Heart left ventricle (tissue), 16 donors: ENCODE measurements at regions of chr3 and their contacts with region 1.

Region 1: DNA sequence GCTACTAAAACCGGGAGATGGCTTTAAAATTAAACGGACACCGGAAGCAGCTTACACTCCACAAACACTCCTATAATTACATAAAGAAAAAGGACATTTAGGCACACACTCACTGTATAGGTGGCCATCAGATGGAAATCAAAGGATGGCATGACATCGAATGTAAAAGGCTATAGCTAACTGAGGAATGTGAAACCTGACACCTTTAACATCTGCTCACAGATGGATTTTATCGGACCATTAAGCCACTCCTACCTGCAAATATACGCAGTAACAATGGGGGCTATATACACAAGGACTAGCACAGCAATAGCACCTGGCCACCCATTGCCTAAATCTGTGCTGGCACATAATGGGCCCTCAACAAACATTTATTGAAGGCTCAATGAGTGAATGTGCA is 14.5 kb upstream of the RBSN start:
- DNase-seq: no peak
- ATAC-seq: no peak
- H3K4me3 ChIP-seq: no peak overlapping the region
- H3K27ac ChIP-seq: no peak overlapping the region
- H3K4me1 ChIP-seq: peaks cover 0 to 6% (median 0%) of the 10 kb centered on the region in 12 donors
- H3K27me3 ChIP-seq: peaks cover 0 to 7% (median 0%) of the 10 kb centered on the region in 9 donors
- CTCF ChIP-seq: no peak
- POLR2A ChIP-seq: no peak

Region 2: GRCh38 chr3:15171096-15171495 is 57.6 kb after region 1 on chr3:
- intact Hi-C with region 1: loop called in 1 of 10 experiments (anchors 10 kb)
- DNase-seq: no peak
- ATAC-seq: no peak
- H3K4me3 ChIP-seq: no peak overlapping the region
- H3K27ac ChIP-seq: no peak overlapping the region
- H3K4me1 ChIP-seq: peaks cover 0 to 10% (median 0%) of the 10 kb centered on the region in 12 donors
- H3K27me3 ChIP-seq: no peaks in the 10 kb centered on the region
- CTCF ChIP-seq: no peak
- POLR2A ChIP-seq: no peak

Region 3: DNA sequence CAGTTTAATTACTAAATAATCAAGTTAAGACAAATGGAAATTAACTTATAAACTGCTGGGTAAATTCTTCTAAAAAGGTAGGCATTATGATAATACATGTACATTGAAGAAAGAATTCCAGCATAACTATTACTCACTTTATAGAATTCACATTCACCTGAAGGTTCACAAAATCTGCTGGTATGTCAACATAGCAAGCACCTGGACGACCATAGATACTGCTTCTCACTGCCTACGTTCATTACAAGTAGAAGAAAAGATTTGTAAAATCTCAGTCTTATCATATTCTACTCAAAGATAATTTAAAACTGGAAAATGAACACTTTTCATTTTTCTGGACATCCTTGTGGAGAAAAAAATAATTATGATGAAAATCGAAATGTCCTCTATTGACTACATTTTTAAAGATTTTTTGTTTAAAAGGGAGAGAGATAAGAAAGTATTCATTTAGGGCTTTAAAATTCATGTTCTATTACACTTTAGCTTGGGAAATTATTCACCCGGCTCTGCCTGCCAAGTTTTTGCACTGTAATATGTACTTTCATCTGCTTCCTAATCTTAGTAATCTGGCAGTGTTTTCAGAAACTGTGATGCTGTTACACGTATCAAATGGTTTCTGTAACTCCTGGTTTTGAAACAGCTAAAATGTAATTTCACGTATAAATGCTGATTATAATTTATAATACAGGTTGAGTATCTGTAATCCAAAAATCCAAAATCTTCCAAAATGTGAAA is 471.8 kb after region 1 on chr3:
- intact Hi-C with region 1: no loop called
- DNase-seq: no peak
- ATAC-seq: no peak
- H3K4me3 ChIP-seq: no peak overlapping the region
- H3K27ac ChIP-seq: no peak overlapping the region
- H3K4me1 ChIP-seq: no peaks in the 10 kb centered on the region
- H3K27me3 ChIP-seq: no peaks in the 10 kb centered on the region
- CTCF ChIP-seq: no peak
- POLR2A ChIP-seq: no peak